Activated B cell treated with CpG ODN at 0.5 μM for 24 hours (primary cell): ENCODE measurements at regions of chr11 and their contacts with region 1.

Region 1: GRCh38 chr11:78325274-78325781 is 92.3 kb downstream of the GAB2 start:
- DNase-seq: no peak
- ATAC-seq: peak; percentile 62
- H3K4me3 Mint-ChIP-seq: no peak overlapping the region
- H3K27ac Mint-ChIP-seq: peak overlapping the region; percentile 8
- H3K4me1 Mint-ChIP-seq: peaks cover 61% of the 10 kb centered on the region
- H3K27me3 Mint-ChIP-seq: no peaks in the 10 kb centered on the region
- CTCF ChIP-seq: no peak

Region 2: GRCh38 chr11:78192223-78192719 is 133.1 kb before region 1 on chr11:
- CTCF ChIA-PET with region 1: no interaction called
- POLR2A ChIA-PET with region 1: no interaction called
- intact Hi-C with region 1: no loop called
- DNase-seq: no peak
- ATAC-seq: no peak
- H3K4me3 Mint-ChIP-seq: no peak overlapping the region
- H3K27ac Mint-ChIP-seq: no peak overlapping the region
- H3K4me1 Mint-ChIP-seq: peaks cover 27% of the 10 kb centered on the region
- H3K27me3 Mint-ChIP-seq: no peaks in the 10 kb centered on the region
- CTCF ChIP-seq: no peak

Region 3: GRCh38 chr11:78310500-78310909 is 14.8 kb before region 1 on chr11:
- CTCF ChIA-PET with region 1: no interaction called
- POLR2A ChIA-PET with region 1: interaction called, 10 read pairs
- intact Hi-C with region 1: loop called (anchors 2 kb)
- DNase-seq: no peak
- ATAC-seq: peak; percentile 66
- H3K4me3 Mint-ChIP-seq: peak overlapping the region; percentile 52
- H3K27ac Mint-ChIP-seq: peak overlapping the region; percentile 86
- H3K4me1 Mint-ChIP-seq: peaks cover 61% of the 10 kb centered on the region
- H3K27me3 Mint-ChIP-seq: no peaks in the 10 kb centered on the region
- CTCF ChIP-seq: no peak

Region 4: DNA sequence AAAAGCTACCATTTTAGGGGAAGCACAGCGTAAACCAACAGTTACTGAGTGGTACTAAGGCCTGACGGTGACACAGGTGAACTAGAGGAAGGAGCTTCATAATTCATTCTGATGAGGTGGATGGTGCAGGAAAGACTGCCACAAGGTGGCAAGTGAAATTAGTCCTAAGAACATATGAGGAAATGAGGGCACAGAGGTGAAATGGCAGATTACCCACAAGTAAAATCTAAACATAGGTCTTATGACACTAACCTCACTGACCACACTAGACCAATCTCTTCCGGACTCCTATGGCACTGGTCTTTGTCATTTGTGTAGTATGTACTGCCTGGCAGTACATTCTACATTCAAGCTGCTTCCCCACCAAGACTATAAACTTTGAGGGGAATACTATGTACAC is 72.1 kb after region 1 on chr11:
- CTCF ChIA-PET with region 1: interaction called, 3 read pairs
- POLR2A ChIA-PET with region 1: no interaction called
- intact Hi-C with region 1: loop called (anchors 2 kb)
- DNase-seq: no peak
- ATAC-seq: peak; percentile 81
- H3K4me3 Mint-ChIP-seq: no peak overlapping the region
- H3K27ac Mint-ChIP-seq: peak overlapping the region; percentile 19
- H3K4me1 Mint-ChIP-seq: peaks cover 25% of the 10 kb centered on the region
- H3K27me3 Mint-ChIP-seq: no peaks in the 10 kb centered on the region
- CTCF ChIP-seq: no peak

Region 5: GRCh38 chr11:78684377-78684776 is 359.0 kb after region 1 on chr11:
- CTCF ChIA-PET with region 1: no interaction called
- POLR2A ChIA-PET with region 1: no interaction called
- intact Hi-C with region 1: no loop called
- DNase-seq: no peak
- ATAC-seq: no peak
- H3K4me3 Mint-ChIP-seq: no peak overlapping the region
- H3K27ac Mint-ChIP-seq: no peak overlapping the region
- H3K4me1 Mint-ChIP-seq: no peaks in the 10 kb centered on the region
- H3K27me3 Mint-ChIP-seq: peaks cover 4% of the 10 kb centered on the region
- CTCF ChIP-seq: no peak

Region 6: GRCh38 chr11:78840200-78840599 is 514.9 kb after region 1 on chr11:
- CTCF ChIA-PET with region 1: no interaction called
- POLR2A ChIA-PET with region 1: no interaction called
- intact Hi-C with region 1: no loop called
- DNase-seq: no peak
- ATAC-seq: no peak
- H3K4me3 Mint-ChIP-seq: no peak overlapping the region
- H3K27ac Mint-ChIP-seq: no peak overlapping the region
- H3K4me1 Mint-ChIP-seq: no peaks in the 10 kb centered on the region
- H3K27me3 Mint-ChIP-seq: peaks cover 16% of the 10 kb centered on the region
- CTCF ChIP-seq: no peak